Dendritic cell treated with granulocyte-macrophage colony-stimulating factor and Interleukin-4, amounts not matched to agents 40 ng/mL and 50 ng/mL, for 4 days (primary cell): ENCODE measurements at regions of chr6 and their contacts with region 1.

Region 1: GRCh38 chr6:13574149-13574570 is 241 bp upstream of the SIRT5 start:
- H3K4me3 Mint-ChIP-seq: peak overlapping the region; percentile 87
- H3K27ac Mint-ChIP-seq: peak overlapping the region; percentile 92
- H3K4me1 Mint-ChIP-seq: peaks cover 37% of the 10 kb centered on the region
- H3K27me3 Mint-ChIP-seq: peaks cover 8% of the 10 kb centered on the region

Region 2: GRCh38 chr6:13194852-13195251 is 379.3 kb before region 1 on chr6:
- intact Hi-C with region 1: loop called (anchors 10 kb)
- H3K4me3 Mint-ChIP-seq: no peak overlapping the region
- H3K27ac Mint-ChIP-seq: no peak overlapping the region
- H3K4me1 Mint-ChIP-seq: no peaks in the 10 kb centered on the region
- H3K27me3 Mint-ChIP-seq: no peaks in the 10 kb centered on the region

Region 3: DNA sequence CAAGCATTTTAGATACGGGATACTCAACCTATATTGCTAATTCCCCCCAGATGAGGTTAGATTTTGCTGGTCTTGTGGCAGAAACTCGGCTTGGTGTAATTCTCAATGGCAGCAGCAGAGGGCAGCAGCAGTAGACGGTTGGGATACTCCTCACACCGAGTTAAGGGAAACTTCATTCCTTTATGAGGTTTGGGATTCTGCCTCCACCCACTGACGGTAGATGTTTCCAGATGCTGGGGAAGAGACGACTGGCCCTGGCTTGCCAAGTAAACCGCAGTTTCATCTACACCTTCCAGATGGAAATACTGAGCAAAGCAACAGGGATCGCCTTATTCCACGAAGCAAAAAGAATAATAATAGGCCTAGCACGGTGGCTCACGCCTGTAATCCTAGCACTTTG is 237.6 kb before region 1 on chr6:
- intact Hi-C with region 1: loop called (anchors 2 kb)
- H3K4me3 Mint-ChIP-seq: no peak overlapping the region
- H3K27ac Mint-ChIP-seq: no peak overlapping the region
- H3K4me1 Mint-ChIP-seq: peaks cover 34% of the 10 kb centered on the region
- H3K27me3 Mint-ChIP-seq: no peaks in the 10 kb centered on the region

Region 4: DNA sequence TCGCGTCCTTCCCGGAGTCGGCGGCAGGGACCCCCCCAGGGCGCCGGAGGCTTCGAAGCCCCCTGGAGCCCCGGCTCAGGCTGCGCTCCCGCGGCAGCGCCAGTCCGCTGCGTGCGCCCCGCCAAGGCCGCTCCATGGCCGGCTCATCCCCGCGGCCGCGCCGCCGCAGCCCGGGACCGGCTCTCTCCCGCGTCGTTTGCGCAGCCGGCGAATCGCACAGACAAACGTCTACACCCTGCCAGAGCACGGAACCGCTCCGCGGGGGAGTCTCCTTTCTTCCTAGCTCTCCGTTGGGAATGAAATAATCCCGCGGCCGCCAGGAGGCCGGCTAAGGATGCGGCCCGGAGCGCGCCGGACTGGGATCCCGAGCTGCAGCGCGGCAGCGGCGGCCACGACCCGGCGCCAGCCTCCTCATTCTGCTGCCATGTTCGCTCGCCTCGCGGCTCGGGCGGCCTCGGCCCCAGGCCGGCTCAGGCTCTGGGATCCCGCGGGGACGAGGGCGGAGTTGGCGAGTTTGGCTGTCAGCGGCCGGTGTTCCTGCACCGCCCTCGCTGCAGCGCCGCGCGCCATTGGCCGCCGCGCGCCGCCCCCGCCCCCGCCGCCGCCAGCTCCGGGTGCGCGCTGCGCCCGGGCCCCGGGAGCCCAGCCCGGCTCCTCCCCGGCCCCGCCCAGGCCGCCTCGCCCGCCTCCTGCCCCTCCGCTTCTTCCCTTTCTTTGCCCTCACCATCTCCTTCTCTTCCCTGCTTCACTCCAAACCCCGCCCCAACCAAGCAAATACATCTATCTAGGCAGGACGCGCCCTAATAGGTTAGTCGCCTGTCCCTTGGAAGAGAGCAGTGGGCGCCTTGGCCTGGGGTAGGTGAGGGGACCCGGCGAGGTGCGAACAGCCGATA is 86.8 kb before region 1 on chr6 and contains the start of gene GFOD1:
- intact Hi-C with region 1: loop called (anchors 10 kb)
- H3K4me3 Mint-ChIP-seq: peak within 1 kb of the TSS; percentile 94
- H3K27ac Mint-ChIP-seq: peak within 1 kb of the TSS; percentile 81
- H3K4me1 Mint-ChIP-seq: peaks cover 44% of the 10 kb centered on the region
- H3K27me3 Mint-ChIP-seq: peaks cover 11% of the 10 kb centered on the region

Region 5: DNA sequence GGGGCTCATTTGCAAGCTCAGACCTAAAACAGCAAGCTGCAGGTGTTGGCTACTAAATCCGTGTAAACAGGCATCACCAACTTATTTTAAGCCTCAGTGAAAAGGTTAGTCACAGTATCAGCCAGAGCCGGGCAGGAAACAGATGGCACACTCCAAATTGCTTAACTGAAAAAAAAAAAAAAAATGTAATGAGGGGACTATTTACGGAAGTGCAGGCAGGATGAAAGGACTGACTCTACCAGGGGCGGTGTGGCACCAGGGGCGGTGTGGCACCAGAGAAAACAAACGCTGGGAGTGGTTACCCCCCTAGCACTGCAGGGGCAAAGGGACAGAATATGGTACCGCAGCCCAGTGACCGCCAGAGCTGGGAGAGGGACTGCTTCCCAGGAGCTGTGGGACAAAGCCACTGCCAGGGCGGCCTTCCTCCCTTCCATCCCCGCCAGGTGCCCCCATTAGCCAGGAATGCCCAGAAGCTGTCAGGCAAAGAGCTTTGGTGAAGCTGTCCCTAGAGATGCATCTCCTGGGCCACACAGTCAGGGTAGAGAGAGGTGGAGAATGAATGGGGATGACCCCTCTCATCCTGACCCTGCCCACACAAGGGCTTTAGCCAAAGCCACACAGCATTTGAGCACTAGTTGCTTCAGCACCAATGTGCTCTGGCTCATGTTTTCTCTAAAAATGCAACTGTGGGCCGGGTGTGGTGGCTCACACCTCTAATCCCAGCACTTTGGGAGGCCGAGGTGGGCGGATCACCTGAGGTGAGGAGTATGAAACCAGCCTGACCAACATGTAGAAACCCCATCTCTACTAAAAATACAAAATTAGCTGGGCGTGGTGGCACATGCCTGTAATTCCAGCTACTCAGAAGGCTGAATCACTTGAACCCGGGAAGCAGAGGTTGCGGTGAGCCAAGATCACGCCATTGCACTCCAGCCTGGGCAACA is 47.2 kb before region 1 on chr6:
- intact Hi-C with region 1: loop called (anchors 5 kb)
- H3K4me3 Mint-ChIP-seq: peak overlapping the region; percentile 6
- H3K27ac Mint-ChIP-seq: peak overlapping the region; percentile 84
- H3K4me1 Mint-ChIP-seq: peaks cover 40% of the 10 kb centered on the region
- H3K27me3 Mint-ChIP-seq: no peaks in the 10 kb centered on the region

Region 6: DNA sequence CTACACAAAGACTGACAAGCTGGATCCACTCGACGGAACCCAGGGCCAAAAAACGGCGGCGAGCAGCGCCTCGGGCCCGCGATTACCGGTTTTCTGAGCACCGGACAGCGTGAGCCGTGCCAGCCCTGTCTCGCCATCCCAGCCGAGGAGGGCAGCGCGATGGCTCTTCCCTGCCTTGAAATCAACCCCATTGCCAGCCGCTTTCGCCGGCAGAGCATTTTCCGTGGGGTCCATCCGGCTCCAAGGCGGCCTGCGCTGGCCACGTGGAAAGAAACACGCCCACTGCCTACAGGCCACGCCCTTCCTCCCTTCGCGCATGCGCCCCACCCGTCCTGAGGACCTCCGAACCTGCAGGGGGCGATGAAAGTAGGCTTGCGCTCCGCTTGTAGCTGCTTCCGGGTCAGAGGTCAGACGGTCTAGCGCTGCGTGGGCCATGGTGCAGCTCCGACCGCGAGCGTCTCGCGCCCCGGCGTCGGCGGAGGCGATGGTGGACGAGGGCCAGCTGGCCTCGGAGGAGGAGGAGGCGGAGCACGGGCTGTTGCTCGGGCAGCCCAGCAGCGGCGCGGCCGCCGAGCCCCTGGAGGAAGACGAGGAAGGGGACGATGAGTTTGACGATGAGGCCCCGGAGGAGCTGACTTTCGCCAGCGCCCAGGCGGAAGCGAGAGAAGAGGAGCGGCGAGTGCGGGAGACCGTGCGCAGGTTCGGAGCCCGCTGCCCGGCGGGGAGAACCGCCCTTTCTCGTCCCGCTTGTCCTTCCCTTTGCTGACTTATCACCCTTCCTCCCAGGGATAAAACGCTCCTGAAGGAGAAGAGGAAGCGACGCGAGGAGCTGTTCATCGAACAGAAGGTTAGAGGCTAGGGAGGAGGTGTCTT is 41.0 kb after region 1 on chr6 and contains the start of gene NOL7:
- intact Hi-C with region 1: loop called (anchors 2 kb)
- H3K4me3 Mint-ChIP-seq: peak within 1 kb of the TSS; percentile 96
- H3K27ac Mint-ChIP-seq: peak within 1 kb of the TSS; percentile 97
- H3K4me1 Mint-ChIP-seq: peaks cover 41% of the 10 kb centered on the region
- H3K27me3 Mint-ChIP-seq: no peaks in the 10 kb centered on the region

Region 7: GRCh38 chr6:13660893-13661292 is 86.7 kb after region 1 on chr6:
- intact Hi-C with region 1: no loop called
- H3K4me3 Mint-ChIP-seq: no peak overlapping the region
- H3K27ac Mint-ChIP-seq: no peak overlapping the region
- H3K4me1 Mint-ChIP-seq: peaks cover 36% of the 10 kb centered on the region
- H3K27me3 Mint-ChIP-seq: no peaks in the 10 kb centered on the region